CD4-positive, alpha-beta memory T cell (primary cell): ENCODE measurements at regions of chr5 and their contacts with region 1.

Region 1: DNA sequence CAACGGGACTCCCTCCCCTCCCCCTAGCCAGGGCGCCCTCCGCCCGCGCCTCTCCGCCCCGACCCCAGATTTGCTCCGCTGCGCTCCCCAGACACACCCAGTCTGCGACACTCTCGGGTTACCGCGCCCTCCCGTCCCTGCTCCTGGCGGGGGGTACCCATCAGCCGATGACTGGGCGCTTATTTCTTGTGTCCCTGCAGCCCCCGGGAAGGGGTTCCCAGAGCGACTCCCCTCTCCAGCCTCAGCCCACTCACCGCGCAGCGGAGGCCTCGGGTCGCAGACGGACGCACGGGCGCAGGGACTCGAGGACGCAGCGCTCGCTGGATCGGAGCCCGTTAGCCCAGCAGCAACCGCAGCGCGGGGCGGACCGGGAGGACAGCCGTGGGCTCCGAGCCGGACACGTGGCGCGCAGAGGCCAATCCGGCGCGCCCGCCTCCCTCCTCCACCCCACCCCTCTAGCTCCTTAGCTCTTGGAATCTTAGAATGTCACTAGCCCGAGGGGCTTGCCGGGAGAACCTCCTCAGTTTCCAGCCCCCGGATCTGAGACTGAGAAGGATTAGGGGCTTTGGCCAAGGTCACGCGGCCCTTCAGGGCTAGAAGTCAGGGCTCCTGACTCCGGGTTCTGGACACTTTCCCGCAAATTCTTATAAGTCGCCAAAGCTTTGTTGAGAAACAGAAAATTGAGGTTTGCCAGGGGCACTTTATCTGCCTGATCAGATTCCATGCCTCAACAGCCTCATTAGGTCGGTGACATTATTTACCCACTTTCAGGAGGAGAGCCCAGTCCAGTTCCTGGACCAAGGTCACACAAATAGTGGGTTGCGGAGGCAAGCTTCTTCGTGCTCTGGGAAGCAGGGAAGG is at the start of gene ANXA6:
- DNase-seq: peak; percentile 58 to 71 (median 64)
- H3K4me3 ChIP-seq: peak within 1 kb of the TSS; percentile 80 to 90
- H3K4me3 Mint-ChIP-seq: peak within 1 kb of the TSS; percentile 91 to 99 (median 97)
- H3K27ac ChIP-seq: peak within 1 kb of the TSS; percentile 84
- H3K27ac Mint-ChIP-seq: peak within 1 kb of the TSS; percentile 93 to 99 (median 97)
- H3K4me1 ChIP-seq: peaks cover 55% of the 10 kb centered on the region
- H3K4me1 Mint-ChIP-seq: peaks cover 37 to 73% (median 51%) of the 10 kb centered on the region in 4 donors
- H3K27me3 ChIP-seq: no peaks in the 10 kb centered on the region
- H3K27me3 Mint-ChIP-seq: no peaks in the 10 kb centered on the region
- total RNA-seq, gene ANXA6: 318 to 342 TPM

Region 2: DNA sequence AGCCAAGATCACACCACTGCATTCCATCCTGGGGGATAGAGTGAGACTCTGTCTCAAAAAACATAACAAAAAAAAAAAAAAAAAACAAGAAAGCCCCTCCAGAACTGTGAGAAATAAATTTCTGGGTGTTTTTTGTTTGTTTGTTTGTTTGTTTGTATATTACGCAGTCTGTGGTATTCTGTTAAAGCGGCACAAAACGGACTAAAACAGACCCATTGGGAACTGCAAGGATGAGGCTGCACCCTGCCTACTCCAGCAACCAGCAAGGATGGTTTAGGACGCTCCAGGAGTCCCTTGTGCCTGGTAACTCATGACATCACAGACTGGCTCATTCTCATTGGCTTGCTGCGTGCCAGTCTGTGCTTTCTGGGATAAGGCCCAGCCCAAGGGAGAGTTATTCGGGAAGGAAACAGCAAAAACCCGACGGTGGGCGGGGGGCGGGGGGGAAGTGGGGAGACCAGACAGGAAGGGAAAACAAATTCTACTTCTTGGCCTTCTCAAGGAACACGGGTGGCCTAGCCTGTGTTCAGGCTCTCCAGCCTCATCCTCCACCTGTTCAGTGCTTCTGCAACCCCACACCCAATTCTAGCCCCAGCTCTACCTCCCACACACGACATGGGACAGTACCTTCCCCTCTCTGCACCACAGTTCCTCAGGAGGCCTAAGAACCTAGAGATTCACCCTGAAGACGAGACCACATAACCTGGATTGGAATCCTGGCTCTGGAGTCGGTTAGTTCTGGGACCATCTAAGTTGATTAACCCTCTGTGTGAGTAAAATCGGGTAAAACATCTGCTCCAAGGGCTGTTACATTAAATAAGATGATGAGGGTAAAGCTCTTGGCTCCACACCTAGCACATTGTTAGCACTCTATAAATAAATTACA is 747.8 kb before region 1 on chr5:
- CTCF ChIA-PET with region 1: no interaction called
- POLR2A ChIA-PET with region 1: no interaction called
- intact Hi-C with region 1: loop called (anchors 5 kb)
- DNase-seq: peak in 4 of 5 donors; percentile 34 to 54 (median 48)
- H3K4me3 ChIP-seq: peak overlapping the region; percentile 34 to 78
- H3K4me3 Mint-ChIP-seq: peak overlapping the region; percentile 97 to 100 (median 99)
- H3K27ac ChIP-seq: peak overlapping the region; percentile 98
- H3K27ac Mint-ChIP-seq: peak overlapping the region; percentile 99 to 100 (median 99)
- H3K4me1 ChIP-seq: peaks cover 50% of the 10 kb centered on the region
- H3K4me1 Mint-ChIP-seq: peaks cover 26 to 57% (median 38%) of the 10 kb centered on the region in 4 donors
- H3K27me3 ChIP-seq: no peaks in the 10 kb centered on the region
- H3K27me3 Mint-ChIP-seq: no peaks in the 10 kb centered on the region

Region 3: DNA sequence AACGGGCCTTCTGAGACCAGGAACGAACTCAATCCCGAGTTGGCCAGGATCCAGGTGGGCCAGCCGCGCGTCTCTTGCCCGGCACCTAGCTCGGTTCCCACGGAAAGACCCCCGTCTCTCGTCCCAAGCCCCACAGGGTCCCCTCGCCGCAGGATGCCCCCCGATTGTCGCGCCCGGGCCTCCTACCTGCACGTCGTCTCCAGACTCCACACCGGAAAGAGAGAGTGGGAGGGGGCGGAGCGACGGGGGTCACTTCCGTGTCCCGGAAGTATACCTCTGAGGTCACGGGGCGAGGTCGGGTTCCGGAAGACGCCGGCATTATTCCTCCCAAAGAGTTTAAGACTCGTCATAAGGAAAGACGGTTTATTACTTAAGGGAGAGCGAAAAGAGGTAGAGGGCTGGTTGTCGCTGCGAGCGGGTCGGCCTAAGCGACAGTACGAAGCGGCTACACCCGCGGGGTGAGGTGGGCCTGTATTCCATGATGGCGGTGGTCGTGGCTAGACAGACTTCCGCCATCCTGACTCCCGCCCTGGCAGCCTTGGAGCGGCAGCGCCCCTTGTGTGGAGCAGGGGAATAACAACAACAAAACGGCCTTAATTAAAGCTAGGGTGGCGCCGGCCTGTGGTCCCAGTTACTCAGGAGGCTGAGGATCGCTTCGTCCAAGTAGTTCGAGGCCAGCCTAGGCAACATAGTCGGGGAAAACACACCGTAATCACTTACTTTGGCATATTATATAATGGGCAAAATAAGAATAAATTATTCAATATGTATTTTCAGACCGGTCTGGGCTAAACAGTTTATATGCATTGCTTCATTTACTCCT is 707.9 kb before region 1 on chr5 and contains the start of gene RPS14:
- CTCF ChIA-PET with region 1: interaction called, 3 read pairs
- POLR2A ChIA-PET with region 1: interaction called, 3 read pairs
- intact Hi-C with region 1: loop called (anchors 10 kb)
- DNase-seq: peak; percentile 96 to 98 (median 97)
- H3K4me3 ChIP-seq: peak within 1 kb of the TSS; percentile 87 to 99
- H3K4me3 Mint-ChIP-seq: peak within 1 kb of the TSS; percentile 92 to 100 (median 98)
- H3K27ac ChIP-seq: peak within 1 kb of the TSS; percentile 99
- H3K27ac Mint-ChIP-seq: peak within 1 kb of the TSS; percentile 99 to 100 (median 100)
- H3K4me1 ChIP-seq: peaks cover 28% of the 10 kb centered on the region
- H3K4me1 Mint-ChIP-seq: peaks cover 15 to 46% (median 36%) of the 10 kb centered on the region in 4 donors
- H3K27me3 ChIP-seq: no peaks in the 10 kb centered on the region
- H3K27me3 Mint-ChIP-seq: no peaks in the 10 kb centered on the region
- total RNA-seq, gene RPS14: 5,260 to 5,575 TPM

Region 4: DNA sequence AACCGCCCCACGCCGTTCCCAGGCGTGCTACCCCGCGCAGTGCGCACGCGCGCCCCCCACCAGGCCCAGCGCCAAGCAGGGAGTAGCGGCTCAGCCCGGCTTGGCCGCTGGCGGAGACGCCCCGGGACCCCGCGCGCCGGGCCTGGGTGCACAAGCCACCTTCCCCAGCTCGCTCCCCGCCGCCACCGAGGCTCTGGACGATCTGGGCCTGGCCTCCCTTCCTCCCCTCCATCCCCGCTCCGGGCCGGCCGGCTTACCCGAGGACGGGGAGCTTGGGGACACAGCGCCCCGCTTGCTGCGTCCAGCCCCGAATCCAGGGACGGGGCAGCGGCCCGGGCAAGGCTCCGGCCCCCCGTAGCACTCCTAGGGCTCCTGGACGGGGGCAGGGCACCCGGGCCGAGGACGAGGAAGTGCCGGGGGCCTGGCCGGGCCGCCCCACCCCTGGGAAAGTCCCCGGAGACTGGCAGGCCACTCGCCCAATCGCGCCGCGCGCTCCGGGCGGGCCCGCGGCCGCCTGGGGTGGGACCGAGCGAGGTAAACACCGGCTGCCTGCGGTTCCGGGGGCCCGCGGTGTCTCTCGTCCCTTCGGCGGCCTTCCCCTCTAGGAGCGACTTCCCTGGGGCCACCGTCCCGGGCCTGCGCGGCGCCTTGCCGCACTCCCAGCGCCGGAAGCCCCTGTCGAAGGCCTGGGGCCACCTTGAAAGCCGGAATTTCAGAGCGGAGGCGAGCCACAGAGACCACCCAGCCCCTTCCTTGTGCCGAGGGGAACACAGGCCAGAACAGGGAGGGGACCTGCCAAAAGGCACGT is 76.8 kb before region 1 on chr5 and contains the start of gene TNIP1:
- CTCF ChIA-PET with region 1: interaction called, 3 read pairs
- POLR2A ChIA-PET with region 1: interaction called, 17 read pairs
- intact Hi-C with region 1: loop called (anchors 2 kb)
- DNase-seq: peak; percentile 91 to 97 (median 93)
- H3K4me3 ChIP-seq: peak within 1 kb of the TSS; percentile 61 to 87
- H3K4me3 Mint-ChIP-seq: peak within 1 kb of the TSS; percentile 88 to 98 (median 94)
- H3K27ac ChIP-seq: peak within 1 kb of the TSS; percentile 99
- H3K27ac Mint-ChIP-seq: peak within 1 kb of the TSS; percentile 76 to 98 (median 96)
- H3K4me1 ChIP-seq: peaks cover 89% of the 10 kb centered on the region
- H3K4me1 Mint-ChIP-seq: peaks cover 69 to 94% (median 76%) of the 10 kb centered on the region in 4 donors
- H3K27me3 ChIP-seq: no peaks in the 10 kb centered on the region
- H3K27me3 Mint-ChIP-seq: no peaks in the 10 kb centered on the region
- total RNA-seq, gene TNIP1: 227 to 233 TPM

Region 5: DNA sequence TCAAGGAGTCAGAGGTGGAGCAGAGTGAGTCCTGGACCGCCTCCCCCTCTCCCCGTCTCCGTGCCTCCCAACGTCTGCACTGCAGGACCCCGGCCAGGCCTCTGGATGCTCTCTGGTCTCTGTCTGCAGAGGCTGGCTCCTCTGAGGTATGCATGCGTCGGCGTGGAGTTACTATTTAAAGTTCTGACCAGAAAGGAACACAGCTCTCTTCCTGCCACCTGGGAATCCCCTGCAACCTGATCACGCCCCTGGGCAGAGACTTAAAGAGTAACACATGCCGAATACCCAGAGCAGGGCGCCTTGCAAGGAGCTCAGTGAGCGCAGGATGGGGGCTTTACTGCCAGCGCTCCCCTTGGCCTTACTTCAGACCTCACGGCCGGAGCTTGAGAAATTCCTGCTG is 16.1 kb before region 1 on chr5:
- CTCF ChIA-PET with region 1: interaction called, 2,066 read pairs
- POLR2A ChIA-PET with region 1: interaction called, 249 read pairs
- intact Hi-C with region 1: loop called (anchors 1 kb)
- DNase-seq: peak; percentile 47 to 84 (median 58)
- H3K4me3 ChIP-seq: peak overlapping the region in 1 of 2 donors; percentile 23
- H3K4me3 Mint-ChIP-seq: peak overlapping the region; percentile 71 to 91 (median 84)
- H3K27ac ChIP-seq: peak overlapping the region; percentile 68
- H3K27ac Mint-ChIP-seq: peak overlapping the region; percentile 90 to 97 (median 94)
- H3K4me1 ChIP-seq: peaks cover 91% of the 10 kb centered on the region
- H3K4me1 Mint-ChIP-seq: peaks cover 75 to 100% (median 94%) of the 10 kb centered on the region in 4 donors
- H3K27me3 ChIP-seq: no peaks in the 10 kb centered on the region
- H3K27me3 Mint-ChIP-seq: no peaks in the 10 kb centered on the region

Region 6: GRCh38 chr5:151315998-151316597 is 158.4 kb after region 1 on chr5:
- CTCF ChIA-PET with region 1: no interaction called
- POLR2A ChIA-PET with region 1: no interaction called
- intact Hi-C with region 1: loop called (anchors 10 kb)
- DNase-seq: peak in 4 of 5 donors; percentile 2 to 19 (median 12)
- H3K4me3 ChIP-seq: no peak overlapping the region
- H3K4me3 Mint-ChIP-seq: no peak overlapping the region
- H3K27ac ChIP-seq: no peak overlapping the region
- H3K27ac Mint-ChIP-seq: no peak overlapping the region
- H3K4me1 ChIP-seq: no peaks in the 10 kb centered on the region
- H3K4me1 Mint-ChIP-seq: peaks cover 0 to 4% (median 1%) of the 10 kb centered on the region in 4 donors
- H3K27me3 ChIP-seq: no peaks in the 10 kb centered on the region
- H3K27me3 Mint-ChIP-seq: peaks cover 8 to 11% of the 10 kb centered on the region in 2 donors